Pancreas (tissue), 10 donors: ENCODE measurements at regions of chr10 and their contacts with region 1.

Region 1: DNA sequence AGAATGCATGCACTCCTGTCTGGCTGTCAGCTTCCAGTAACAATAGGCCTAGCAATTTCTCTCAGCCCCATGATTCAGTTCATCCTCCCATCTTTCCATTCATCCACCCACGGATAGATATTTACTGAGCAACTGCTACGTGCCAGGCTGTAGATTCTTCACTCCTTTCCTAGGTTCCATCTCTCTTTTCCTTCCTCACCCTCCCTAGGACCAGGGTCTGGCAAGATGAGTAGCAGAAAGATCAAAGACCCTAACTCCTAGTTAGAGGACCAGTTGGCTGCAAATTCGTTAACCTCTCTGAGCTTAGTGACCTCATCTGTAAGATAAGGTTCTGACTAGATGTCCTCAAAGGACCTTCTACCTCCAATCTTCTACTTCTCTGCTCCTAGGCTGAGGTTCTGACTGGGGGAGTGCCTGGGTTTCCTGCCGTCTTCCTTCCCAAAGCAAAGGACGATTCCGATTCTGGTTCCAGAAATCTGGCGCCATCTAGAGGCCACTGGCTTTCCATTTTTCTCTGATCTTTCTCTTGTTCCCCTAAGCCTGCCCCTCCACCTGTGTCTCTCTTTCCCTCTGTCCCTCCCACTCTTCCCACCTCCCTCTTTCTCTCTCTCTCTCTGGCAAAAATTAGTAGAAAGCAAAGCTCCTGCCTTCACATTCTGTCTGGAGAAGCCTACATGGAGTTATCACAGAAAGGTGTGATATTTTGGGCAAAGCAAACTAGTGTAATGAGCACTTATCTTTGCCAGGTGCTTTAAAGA is 26.2 kb downstream of the TBATA start:
- DNase-seq: peak in 5 of 6 donors; percentile 11 to 70 (median 48)
- ATAC-seq: peak in 3 of 4 donors; percentile 75 to 88 (median 80)
- H3K4me3 ChIP-seq: no peak overlapping the region
- H3K27ac ChIP-seq: no peak overlapping the region
- H3K4me1 ChIP-seq: no peaks in the 10 kb centered on the region
- H3K27me3 ChIP-seq: no peaks in the 10 kb centered on the region
- CTCF ChIP-seq: peak; percentile 46 to 72 (median 55)

Region 2: DNA sequence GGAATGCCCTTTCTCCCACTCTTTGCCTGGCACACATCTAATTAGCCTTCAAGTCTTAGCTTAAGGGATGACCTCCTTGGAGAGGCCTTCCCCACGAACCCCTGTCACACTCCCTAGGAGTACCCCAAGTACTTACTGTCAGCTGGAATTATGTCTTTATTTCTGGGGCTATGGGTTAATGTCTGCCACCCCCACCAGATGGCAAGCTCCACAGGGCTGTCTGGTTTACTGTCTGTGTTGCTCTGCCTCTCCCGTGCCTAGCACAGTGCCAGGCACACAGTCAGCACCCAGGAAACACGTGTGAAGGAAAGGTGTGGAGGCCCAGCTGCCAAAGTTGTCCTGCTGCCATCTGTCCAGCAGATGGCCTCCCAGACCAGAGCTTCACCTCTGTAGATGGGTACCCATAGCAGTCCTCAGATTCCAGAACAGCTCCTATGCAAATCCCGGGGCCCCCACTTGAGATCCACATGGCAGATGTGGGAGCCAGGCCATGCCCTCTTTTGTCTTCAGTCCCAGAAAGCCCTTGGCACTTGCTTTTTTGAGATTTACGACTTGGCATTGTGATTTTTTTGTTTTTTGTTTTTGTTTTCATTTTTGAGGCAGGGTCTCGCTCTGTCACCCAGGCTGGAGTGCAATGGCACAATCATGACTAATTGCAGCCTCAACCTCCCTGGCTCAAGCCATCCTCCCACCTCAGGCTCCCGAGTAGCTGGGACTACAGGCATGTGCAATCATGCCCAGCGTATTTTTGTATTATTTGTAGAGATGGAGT is 297.5 kb before region 1 on chr10:
- intact Hi-C with region 1: loop called in 2 of 3 experiments (anchors 2 to 10 kb)
- DNase-seq: peak in 3 of 6 donors; percentile 31 to 62 (median 44)
- ATAC-seq: peak; percentile 53 to 76 (median 70)
- H3K4me3 ChIP-seq: no peak overlapping the region
- H3K27ac ChIP-seq: peak overlapping the region in 3 of 4 donors; percentile 28 to 59 (median 59)
- H3K4me1 ChIP-seq: peaks cover 0 to 4% (median 3%) of the 10 kb centered on the region in 3 donors
- H3K27me3 ChIP-seq: no peaks in the 10 kb centered on the region
- CTCF ChIP-seq: peak; percentile 45 to 82 (median 72)

Region 3: DNA sequence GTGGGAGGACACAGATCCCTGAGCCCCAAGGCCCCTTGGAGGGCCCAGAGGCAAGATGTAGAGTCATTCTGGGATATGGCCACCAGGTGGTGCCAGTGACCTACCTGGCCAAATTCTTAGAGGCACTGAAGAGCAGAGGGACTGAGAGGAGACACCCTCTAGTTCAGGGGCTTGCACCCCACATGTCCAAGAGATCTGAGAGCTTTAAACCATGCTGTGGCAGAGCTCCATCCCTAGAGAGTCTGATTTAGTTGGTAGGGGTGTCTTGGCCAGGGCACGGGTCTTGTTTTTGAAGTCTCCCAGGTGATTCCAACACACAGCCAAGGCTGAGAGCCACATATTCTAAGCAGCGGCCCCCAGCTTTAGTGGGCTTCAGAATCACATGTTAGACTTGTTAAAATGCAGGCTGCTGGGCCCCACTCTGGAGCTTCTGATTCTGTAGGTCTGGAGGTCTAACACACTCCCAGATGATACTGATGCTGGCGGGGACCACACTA is 208.9 kb before region 1 on chr10:
- intact Hi-C with region 1: loop called in 2 of 3 experiments (anchors 2 to 5 kb)
- DNase-seq: peak in 5 of 6 donors; percentile 31 to 76 (median 61)
- ATAC-seq: peak; percentile 64 to 90 (median 88)
- H3K4me3 ChIP-seq: no peak overlapping the region
- H3K27ac ChIP-seq: no peak overlapping the region
- H3K4me1 ChIP-seq: no peaks in the 10 kb centered on the region
- H3K27me3 ChIP-seq: no peaks in the 10 kb centered on the region
- CTCF ChIP-seq: peak; percentile 76 to 86 (median 80)